HCT116 (cell line): ENCODE measurements at regions of chr5 and their contacts with region 1.

Region 1: DNA sequence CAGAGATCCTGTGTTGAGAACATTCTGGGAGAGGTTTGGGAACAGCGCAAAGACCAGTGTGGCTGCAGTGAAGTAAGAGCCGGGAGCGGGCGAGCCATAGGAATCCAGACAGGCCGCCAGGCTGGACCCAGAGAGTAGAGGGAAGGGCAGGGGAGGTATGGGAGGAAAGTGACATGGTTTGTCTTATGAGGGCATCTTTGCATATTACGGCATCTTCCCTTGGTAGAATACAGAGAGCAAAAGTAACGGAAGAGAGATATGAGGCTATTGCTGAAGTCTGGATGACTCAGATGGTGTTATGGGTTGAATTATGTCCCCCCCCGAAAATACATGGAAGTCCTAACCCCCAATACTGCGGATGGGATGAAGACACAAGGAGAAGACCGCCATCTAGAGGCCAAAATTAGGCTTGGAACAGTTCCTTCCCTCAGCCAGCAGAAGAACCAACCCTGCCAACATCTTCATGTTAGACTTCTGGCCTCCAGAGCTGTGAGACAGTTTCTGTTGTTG is 268.2 kb downstream of the MAST4 start:
- DNase-seq: no peak
- ATAC-seq: peak; percentile 70
- H3K4me3 ChIP-seq: no peak overlapping the region
- H3K27ac ChIP-seq: no peak overlapping the region
- H3K4me1 ChIP-seq: no peaks in the 10 kb centered on the region
- H3K27me3 ChIP-seq: peaks cover 46% of the 10 kb centered on the region
- CTCF ChIP-seq: peak; percentile 32 to 62 (median 42); a peak in 5 of 6 replicates
- POLR2A ChIP-seq: no peak
- RAD21 ChIP-seq: peak; percentile 53

Region 2: DNA sequence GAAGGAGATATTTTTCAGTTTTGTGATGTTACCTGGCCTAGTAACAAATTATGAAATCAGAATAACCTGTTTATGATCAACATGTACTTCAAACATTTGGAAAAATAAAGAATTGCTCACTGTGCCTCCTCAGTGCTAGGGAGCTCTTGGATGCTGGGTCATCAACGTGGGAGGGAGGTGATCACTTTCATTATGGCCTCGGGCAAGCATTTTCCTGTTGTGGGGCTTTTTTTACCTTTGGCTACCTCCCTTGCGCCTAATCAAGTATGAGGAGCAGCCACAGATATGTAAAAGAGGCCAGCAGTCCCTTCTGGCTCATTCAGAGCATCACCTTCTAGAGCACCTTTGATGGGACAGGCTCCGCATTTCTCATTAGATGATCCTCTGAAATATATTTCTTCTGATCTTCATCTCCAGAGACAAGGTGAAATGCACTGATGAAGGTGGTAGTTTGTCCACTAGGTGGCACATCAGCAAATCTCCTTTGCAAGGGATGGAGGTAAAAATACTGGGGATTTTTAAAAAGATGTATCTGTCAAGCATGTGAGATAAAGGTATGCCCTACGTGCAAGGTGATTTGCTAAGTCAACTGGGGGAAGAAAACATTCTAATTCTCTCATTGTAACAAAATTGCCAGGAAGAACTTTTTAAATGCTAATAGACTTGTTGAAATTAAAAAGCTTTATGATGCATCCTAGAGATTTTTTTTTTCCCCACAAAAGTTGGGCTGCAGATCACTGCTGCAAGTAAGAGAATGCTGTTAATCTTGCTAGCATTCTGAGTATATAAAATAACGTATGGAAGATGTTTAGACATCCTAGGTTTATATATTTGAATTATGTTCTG is 50.0 kb before region 1 on chr5:
- CTCF ChIA-PET with region 1: interaction called, 5 read pairs
- POLR2A ChIA-PET with region 1: no interaction called
- RAD21 ChIA-PET with region 1: no interaction called
- intact Hi-C with region 1: loop called (anchors 1 kb)
- DNase-seq: peak; percentile 28
- ATAC-seq: peak; percentile 73
- H3K4me3 ChIP-seq: no peak overlapping the region
- H3K27ac ChIP-seq: no peak overlapping the region
- H3K4me1 ChIP-seq: no peaks in the 10 kb centered on the region
- H3K27me3 ChIP-seq: peaks cover 61% of the 10 kb centered on the region
- CTCF ChIP-seq: peak; percentile 43 to 68 (median 64); a peak in 5 of 6 replicates
- POLR2A ChIP-seq: no peak
- RAD21 ChIP-seq: peak; percentile 53